Colonic mucosa (tissue), 4 donors: ENCODE measurements at regions of chr2 and their contacts with region 1.

Region 1: DNA sequence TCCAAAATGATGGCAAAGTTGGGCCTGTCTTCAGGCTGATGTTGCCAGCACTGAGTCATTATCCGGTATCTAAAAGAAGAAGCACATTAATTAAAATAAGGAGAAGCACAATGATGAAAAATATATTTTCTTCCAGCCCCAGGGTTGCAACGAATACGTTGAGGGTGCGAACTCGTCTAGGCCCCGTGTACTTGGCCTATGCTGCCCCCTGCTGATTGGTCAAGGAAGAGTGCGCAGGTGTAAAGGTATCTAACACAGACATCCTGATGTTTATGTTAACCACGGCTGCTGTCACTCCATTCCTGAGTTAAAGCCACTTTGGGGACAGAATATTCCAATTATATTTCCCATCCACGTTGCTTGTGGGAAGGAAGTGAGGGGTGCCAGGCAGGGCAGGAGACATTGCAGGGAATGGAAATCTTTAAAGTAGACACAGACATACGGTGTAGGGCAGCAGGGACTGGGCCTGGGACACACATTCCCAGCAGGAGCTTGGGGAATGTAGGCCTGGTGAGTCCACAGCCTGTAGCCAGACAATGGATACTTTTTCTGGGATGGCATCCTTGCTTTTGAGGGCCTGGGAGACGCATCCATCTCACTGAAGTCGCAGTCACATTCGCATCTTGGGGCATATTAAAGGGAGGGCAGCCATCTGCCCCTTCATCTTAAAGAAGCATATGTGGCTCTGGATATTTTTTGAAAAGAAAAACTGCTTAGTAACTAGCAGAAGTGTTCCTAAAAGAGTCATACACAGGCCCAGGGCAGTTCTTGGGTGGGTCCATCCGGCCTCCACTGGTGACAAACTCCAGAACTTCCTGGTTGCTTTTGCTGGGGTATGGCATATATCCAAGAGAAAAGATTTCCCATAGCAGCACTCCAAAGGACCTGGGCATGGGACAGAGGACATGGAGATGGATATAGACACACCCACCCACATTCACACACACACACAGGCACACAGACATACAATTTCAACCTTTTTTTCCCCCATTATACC is 81.9 kb downstream of the CLIP4 start:
- DNase-seq: peak; percentile 74
- H3K4me3 ChIP-seq: no peak overlapping the region
- H3K27ac ChIP-seq: no peak overlapping the region
- H3K4me1 ChIP-seq: no peaks in the 10 kb centered on the region
- H3K27me3 ChIP-seq: no peaks in the 10 kb centered on the region
- CTCF ChIP-seq: peak; percentile 76

Region 2: DNA sequence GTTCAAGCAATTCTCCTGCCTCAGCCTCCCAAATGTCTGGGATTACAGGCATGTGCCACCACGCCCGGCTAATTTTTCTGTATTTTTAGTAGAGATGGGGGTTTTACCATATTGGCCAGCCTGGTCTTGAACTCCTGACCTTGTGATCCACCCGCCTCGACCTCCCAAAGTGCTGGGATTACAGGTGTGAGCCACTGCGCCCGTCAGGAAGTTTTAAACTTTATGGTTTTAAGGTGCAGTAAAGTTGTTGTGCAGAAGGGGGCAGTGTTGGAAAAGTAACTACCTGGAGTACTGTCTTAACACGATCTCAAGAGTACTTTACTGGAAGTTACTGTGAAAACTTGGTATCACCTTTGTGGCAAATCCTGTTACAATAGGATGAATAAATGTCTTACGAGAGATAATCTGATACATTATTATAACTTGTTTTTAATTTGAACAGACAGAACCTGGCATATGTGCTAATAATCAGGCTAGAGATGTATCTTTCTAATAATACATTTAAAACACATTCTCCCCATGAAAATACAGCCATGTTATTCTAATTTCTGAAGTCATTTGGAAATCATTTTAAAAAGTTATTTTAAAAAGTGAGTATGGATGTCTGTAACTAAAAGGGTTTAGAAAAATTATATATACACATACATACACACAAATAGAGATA is 375.7 kb before region 1 on chr2:
- intact Hi-C with region 1: loop called (anchors 10 kb)
- DNase-seq: peak; percentile 80
- H3K4me3 ChIP-seq: no peak overlapping the region
- H3K27ac ChIP-seq: no peak overlapping the region
- H3K4me1 ChIP-seq: no peaks in the 10 kb centered on the region
- H3K27me3 ChIP-seq: no peaks in the 10 kb centered on the region
- CTCF ChIP-seq: peak; percentile 67